Activated T-helper 1 cell treated with anti-CD3 and anti-CD28 coated beads, Interleukin-12 subunit alpha, Interleukin-12 subunit beta, Interleukin-2, Interleukin-4 antibody, amounts not matched to agents 30 ng/mL and 10 ng/mL and 1 ng/mL, durations not matched to agents 14 hours and 24 hours and 36 hours (primary cell): ENCODE measurements at regions of chr2 and their contacts with region 1.

Region 1: DNA sequence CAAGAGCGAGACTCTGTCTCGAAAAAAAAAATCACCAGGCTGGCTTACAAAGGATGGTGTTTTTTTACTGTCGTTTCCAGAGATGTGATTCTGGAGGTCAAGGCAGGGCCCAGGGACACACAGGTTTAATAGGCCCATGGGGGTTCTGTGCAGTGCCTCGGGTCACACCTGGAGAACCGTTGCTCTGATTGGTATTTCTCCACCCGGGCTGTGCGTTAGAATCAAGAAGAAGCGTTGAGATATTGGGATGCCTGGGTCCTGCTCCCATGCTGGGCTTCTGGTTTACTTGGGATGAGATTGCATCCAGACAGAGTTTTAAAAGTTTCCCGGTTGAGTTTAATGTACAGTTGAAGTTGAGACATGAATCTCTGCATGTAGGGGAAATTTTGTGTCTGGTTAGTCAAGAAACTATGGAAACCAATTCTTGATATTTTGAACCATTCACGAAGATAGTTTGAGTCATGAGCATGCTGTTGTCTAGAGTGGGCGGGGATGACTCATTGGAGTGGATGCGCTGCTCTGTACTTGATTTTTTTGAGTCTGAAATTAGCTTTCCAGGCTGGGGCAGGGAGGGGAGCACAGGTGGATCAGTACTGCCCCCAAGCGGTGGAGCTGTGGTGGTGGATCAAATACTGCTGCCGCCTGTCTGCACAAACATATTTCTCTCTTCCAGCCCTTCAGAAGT is 50.1 kb downstream of the GREB1 start:
- DNase-seq: peak; percentile 57
- H3K4me3 Mint-ChIP-seq: no peak overlapping the region
- H3K27ac Mint-ChIP-seq: peak overlapping the region; percentile 68
- H3K4me1 Mint-ChIP-seq: peaks cover 10% of the 10 kb centered on the region
- H3K27me3 Mint-ChIP-seq: peaks cover 11% of the 10 kb centered on the region

Region 2: GRCh38 chr2:10812362-10813162 is 771.4 kb before region 1 on chr2 and contains the start of gene PDIA6:
- intact Hi-C with region 1: loop called (anchors 5 kb)
- DNase-seq: peak; percentile 95
- H3K4me3 Mint-ChIP-seq: peak within 1 kb of the TSS; percentile 92
- H3K27ac Mint-ChIP-seq: peak within 1 kb of the TSS; percentile 91
- H3K4me1 Mint-ChIP-seq: peaks cover 31% of the 10 kb centered on the region
- H3K27me3 Mint-ChIP-seq: peaks cover 13% of the 10 kb centered on the region
- total RNA-seq, gene PDIA6: 171 and 173 TPM in 2 replicates

Region 3: GRCh38 chr2:11129598-11130449 is 454.2 kb before region 1 on chr2:
- intact Hi-C with region 1: loop called (anchors 1 kb)
- DNase-seq: peak; percentile 79
- H3K4me3 Mint-ChIP-seq: peak overlapping the region; percentile 57
- H3K27ac Mint-ChIP-seq: no peak overlapping the region
- H3K4me1 Mint-ChIP-seq: peaks cover 13% of the 10 kb centered on the region
- H3K27me3 Mint-ChIP-seq: peaks cover 10% of the 10 kb centered on the region

Region 4: DNA sequence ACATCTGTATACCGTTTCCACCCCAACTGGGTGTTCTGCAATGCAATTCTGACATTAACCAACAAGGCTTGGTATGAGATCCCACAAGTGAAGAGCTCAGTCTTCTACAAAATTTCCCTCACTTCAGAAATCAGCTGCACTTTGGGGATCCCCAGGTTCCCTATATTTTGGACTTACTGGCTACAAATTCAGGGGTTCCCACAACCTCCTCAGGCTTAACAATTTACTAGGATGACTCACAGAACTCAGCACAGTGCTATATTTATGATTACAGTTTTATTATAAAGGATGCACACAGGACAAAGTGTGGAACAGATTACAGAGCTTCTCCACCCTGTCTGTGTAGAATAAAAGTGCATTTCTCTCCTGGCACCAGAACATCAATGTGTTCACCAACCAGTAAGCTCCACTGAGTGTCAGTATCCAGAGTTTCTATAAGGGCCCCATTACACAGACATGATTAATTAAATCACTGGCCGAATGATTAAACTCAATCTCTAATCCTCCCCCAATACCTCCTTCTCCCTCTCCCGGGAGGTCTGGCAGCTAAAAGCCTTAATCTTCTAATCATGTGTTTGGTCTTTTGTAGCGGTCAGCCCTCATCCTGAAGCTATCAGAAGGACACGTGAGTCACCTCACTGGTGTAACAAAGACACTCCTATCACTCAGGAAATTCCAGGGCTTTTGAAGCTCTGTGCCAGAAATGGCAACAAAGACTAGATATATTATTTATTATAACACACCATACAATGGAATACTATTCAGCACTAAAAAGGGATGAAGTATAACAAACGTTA is 344.1 kb before region 1 on chr2:
- intact Hi-C with region 1: loop called (anchors 5 kb)
- DNase-seq: no peak
- H3K4me3 Mint-ChIP-seq: no peak overlapping the region
- H3K27ac Mint-ChIP-seq: no peak overlapping the region
- H3K4me1 Mint-ChIP-seq: peaks cover 8% of the 10 kb centered on the region
- H3K27me3 Mint-ChIP-seq: no peaks in the 10 kb centered on the region

Region 5: DNA sequence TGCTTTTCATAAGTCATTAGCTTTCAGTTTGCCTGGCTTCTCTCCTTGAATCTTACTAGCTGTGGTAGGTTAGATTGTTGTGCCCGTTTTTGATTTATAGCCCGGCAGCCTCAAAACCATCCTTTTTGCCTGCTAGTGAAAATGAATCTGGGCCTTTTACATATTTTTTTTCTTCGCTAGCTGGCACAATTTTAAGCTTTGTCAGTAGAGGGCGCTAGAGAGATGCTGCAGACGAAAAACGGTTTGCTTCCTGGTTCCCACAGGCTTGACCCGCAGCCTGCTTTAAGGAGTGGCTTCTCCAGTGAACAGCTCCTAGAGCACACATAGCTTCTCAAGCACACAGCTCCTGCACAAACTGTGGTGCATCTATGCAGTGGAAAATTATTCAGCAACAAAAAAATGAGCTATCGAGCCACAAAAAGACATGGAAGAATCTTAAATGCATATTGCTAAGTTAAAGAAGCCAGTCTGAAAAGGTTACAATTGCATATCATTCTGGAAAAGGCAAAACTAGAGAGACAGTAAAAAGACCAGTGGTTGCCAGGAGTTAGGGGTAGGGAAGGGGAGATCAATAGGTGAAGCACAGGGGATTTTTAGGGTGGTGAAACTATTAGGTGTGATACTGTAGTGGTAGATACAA is 165.9 kb before region 1 on chr2:
- intact Hi-C with region 1: loop called (anchors 1 kb)
- DNase-seq: no peak
- H3K4me3 Mint-ChIP-seq: no peak overlapping the region
- H3K27ac Mint-ChIP-seq: no peak overlapping the region
- H3K4me1 Mint-ChIP-seq: no peaks in the 10 kb centered on the region
- H3K27me3 Mint-ChIP-seq: no peaks in the 10 kb centered on the region

Region 6: GRCh38 chr2:11437602-11438001 is 146.4 kb before region 1 on chr2:
- intact Hi-C with region 1: no loop called
- DNase-seq: no peak
- H3K4me3 Mint-ChIP-seq: no peak overlapping the region
- H3K27ac Mint-ChIP-seq: no peak overlapping the region
- H3K4me1 Mint-ChIP-seq: no peaks in the 10 kb centered on the region
- H3K27me3 Mint-ChIP-seq: no peaks in the 10 kb centered on the region

Region 7: GRCh38 chr2:11477994-11478393 is 106.0 kb before region 1 on chr2:
- intact Hi-C with region 1: loop called (anchors 1 kb)
- DNase-seq: peak; percentile 56
- H3K4me3 Mint-ChIP-seq: no peak overlapping the region
- H3K27ac Mint-ChIP-seq: no peak overlapping the region
- H3K4me1 Mint-ChIP-seq: no peaks in the 10 kb centered on the region
- H3K27me3 Mint-ChIP-seq: peaks cover 30% of the 10 kb centered on the region

Region 8: GRCh38 chr2:11778923-11779757 is 195.2 kb after region 1 on chr2:
- intact Hi-C with region 1: loop called (anchors 1 kb)
- DNase-seq: peak; percentile 75
- H3K4me3 Mint-ChIP-seq: peak overlapping the region; percentile 76
- H3K27ac Mint-ChIP-seq: peak overlapping the region; percentile 80
- H3K4me1 Mint-ChIP-seq: peaks cover 46% of the 10 kb centered on the region
- H3K27me3 Mint-ChIP-seq: no peaks in the 10 kb centered on the region

Region 9: GRCh38 chr2:12397854-12398253 is 813.9 kb after region 1 on chr2:
- intact Hi-C with region 1: no loop called
- DNase-seq: no peak
- H3K4me3 Mint-ChIP-seq: no peak overlapping the region
- H3K27ac Mint-ChIP-seq: no peak overlapping the region
- H3K4me1 Mint-ChIP-seq: peaks cover 7% of the 10 kb centered on the region
- H3K27me3 Mint-ChIP-seq: peaks cover 21% of the 10 kb centered on the region